ENCODE measurements at regions of chr19 and their contacts with region 1.

Region 1: DNA sequence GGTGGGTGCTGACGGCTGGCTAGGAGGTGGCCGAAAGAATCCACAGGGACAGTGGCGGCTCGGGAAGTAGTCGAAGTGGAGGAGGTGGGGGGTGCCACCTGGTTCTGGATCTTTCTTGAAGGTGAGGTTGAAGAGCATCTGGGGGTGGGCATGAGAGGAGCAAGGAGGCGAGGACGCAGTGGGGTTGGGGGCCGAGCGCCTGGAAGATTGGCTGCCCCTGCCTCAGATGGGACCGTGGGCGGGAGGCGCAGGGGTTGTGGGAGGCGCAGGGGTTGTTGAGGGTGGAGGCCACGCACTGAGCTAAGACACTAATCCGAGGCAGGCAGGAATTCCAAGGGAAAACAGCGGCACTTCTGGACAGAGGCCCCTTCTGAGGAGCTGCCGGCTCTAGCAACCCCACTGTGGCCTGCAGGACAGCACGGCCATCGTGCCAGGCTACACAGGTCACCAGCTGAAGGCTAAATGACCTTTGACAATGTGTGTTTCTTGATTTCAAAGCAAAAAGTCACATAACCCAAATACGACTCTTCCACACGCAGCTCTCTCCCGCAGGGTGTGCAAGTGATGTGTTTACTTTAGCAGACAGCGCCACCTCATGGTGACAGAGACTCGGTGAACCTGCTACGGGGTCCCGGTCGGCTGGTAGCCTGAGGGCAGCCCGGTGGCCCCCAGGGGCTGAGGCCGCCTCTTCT is 44.1 kb upstream of the RANBP3 start:
- DNase-seq: peak; percentile 71
- H3K4me3 ChIP-seq: no peak overlapping the region
- H3K27ac ChIP-seq: no peak overlapping the region
- H3K4me1 ChIP-seq: peaks cover 12% of the 10 kb centered on the region
- H3K27me3 ChIP-seq: no peaks in the 10 kb centered on the region
- CTCF ChIP-seq: peak; percentile 80 to 85
- POLR2A ChIP-seq: no peak

Region 2: GRCh38 chr19:5637971-5638370 is 384.1 kb before region 1 on chr19:
- CTCF ChIA-PET with region 1: no interaction called
- POLR2A ChIA-PET with region 1: no interaction called
- dilution Hi-C with region 1: no loop called
- intact Hi-C with region 1: no loop called
- DNase-seq: no peak
- H3K4me3 ChIP-seq: no peak overlapping the region
- H3K27ac ChIP-seq: no peak overlapping the region
- H3K4me1 ChIP-seq: no peaks in the 10 kb centered on the region
- H3K27me3 ChIP-seq: no peaks in the 10 kb centered on the region
- CTCF ChIP-seq: no peak
- POLR2A ChIP-seq: no peak

Region 3: DNA sequence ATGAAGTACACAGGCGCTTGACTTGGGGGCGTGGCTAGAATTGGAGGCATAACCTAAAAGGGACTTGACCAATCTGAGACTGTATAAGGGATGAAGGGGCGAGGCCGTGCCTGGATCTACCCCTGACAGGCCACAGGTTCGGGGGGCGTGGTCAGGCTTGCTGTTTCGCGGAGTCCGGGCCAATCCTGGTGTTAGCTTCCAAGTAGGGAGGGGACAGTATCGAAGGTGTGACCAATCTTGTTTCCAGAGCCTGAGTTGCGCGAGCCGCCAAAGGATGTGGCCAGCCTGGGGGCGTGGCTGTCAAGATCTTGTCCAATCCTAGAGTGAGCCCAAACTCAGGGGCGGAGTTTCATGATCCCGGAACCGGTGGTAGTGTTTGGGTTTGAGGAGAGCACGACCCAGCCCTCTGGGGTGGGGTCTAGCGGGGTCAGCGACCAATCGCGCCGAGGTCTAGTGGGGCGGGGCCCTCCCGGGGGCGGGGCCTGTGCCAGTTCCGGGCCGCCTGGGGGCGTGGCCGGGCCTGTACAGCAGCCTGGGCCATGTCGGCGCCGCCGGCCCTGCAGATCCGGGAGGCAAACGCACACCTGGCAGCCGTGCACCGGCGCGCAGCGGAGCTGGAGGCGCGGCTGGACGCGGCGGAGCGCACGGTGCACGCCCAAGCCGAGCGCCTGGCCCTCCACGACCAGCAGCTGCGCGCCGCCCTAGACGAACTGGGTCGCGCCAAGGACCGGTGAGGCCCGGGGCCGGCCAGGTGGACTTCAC is 117.5 kb before region 1 on chr19 and contains the start of gene VMAC:
- CTCF ChIA-PET with region 1: interaction called, 7 read pairs
- POLR2A ChIA-PET with region 1: no interaction called
- dilution Hi-C with region 1: no loop called
- intact Hi-C with region 1: loop called (anchors 5 kb)
- DNase-seq: peak; percentile 100
- H3K4me3 ChIP-seq: peak within 1 kb of the TSS; percentile 45 to 89 (median 86)
- H3K27ac ChIP-seq: peak within 1 kb of the TSS; percentile 90
- H3K4me1 ChIP-seq: peaks cover 8% of the 10 kb centered on the region
- H3K27me3 ChIP-seq: no peaks in the 10 kb centered on the region
- CTCF ChIP-seq: no peak
- POLR2A ChIP-seq: peak; percentile 56
- total RNA-seq, gene VMAC: 4.4 and 4.7 TPM in 2 replicates

Region 4: GRCh38 chr19:5961969-5962945 is 59.8 kb before region 1 on chr19:
- CTCF ChIA-PET with region 1: interaction called, 134 read pairs
- POLR2A ChIA-PET with region 1: no interaction called
- dilution Hi-C with region 1: no loop called
- intact Hi-C with region 1: no loop called
- DNase-seq: peak; percentile 93
- H3K4me3 ChIP-seq: no peak overlapping the region
- H3K27ac ChIP-seq: peak overlapping the region; percentile 42
- H3K4me1 ChIP-seq: peaks cover 15% of the 10 kb centered on the region
- H3K27me3 ChIP-seq: no peaks in the 10 kb centered on the region
- CTCF ChIP-seq: no peak
- POLR2A ChIP-seq: no peak

Region 5: DNA sequence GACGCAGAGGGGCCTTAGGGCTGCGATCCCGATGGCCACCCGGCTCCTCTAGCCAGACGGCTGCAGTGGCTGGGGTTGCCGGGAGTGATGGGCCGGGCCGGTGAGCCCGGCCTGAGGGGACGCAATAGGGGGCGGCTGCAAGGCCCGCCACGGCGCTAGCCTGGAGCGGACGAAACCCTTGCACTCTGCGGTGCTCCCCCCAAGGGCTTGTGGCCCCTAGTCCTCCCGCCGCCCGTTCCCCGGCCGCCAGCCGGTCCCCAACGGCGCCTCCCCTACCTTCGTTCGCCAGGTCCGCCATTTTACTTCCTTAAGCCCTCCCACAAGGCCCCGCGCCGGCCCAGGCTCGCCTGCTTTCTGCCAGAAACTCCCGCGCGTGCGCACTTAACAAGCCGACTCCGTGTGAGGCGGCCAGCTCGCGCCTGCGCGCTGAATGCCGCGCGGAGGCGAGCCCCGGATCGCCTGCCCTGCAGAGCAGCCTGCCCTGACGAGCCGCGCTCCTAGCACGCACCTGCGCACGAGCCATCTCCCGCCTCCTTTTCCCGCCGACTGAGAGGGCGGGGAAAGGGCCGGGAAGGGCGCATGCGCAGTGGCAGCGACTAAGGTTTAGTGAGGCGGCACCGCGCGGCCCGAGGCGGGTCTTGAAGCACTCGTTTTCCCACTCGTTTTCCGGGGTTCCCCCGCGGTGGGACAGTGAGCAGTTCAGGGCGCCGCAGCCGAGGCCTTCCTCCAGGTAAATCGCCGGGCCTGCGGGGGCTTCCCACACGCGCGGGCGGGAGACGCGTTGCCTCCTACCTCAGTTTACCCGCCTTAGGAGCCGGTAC is 44.0 kb before region 1 on chr19 and contains the start of gene RANBP3:
- CTCF ChIA-PET with region 1: interaction called, 304 read pairs
- POLR2A ChIA-PET with region 1: no interaction called
- dilution Hi-C with region 1: no loop called
- intact Hi-C with region 1: no loop called
- DNase-seq: peak; percentile 99
- H3K4me3 ChIP-seq: peak within 1 kb of the TSS; percentile 47 to 93 (median 91)
- H3K27ac ChIP-seq: peak within 1 kb of the TSS; percentile 71
- H3K4me1 ChIP-seq: peaks cover 17% of the 10 kb centered on the region
- H3K27me3 ChIP-seq: no peaks in the 10 kb centered on the region
- CTCF ChIP-seq: no peak
- POLR2A ChIP-seq: peak; percentile 66
- total RNA-seq, gene RANBP3: 72.3 and 87.8 TPM in 2 replicates

Region 6: GRCh38 chr19:5993648-5994358 is 28.2 kb before region 1 on chr19:
- CTCF ChIA-PET with region 1: interaction called, 304 read pairs
- POLR2A ChIA-PET with region 1: no interaction called
- dilution Hi-C with region 1: no loop called
- intact Hi-C with region 1: no loop called
- DNase-seq: peak; percentile 54
- H3K4me3 ChIP-seq: no peak overlapping the region
- H3K27ac ChIP-seq: no peak overlapping the region
- H3K4me1 ChIP-seq: peaks cover 15% of the 10 kb centered on the region
- H3K27me3 ChIP-seq: no peaks in the 10 kb centered on the region
- CTCF ChIP-seq: no peak
- POLR2A ChIP-seq: no peak

Region 7: GRCh38 chr19:6048808-6049405 is 26.9 kb after region 1 on chr19:
- CTCF ChIA-PET with region 1: interaction called, 17 read pairs
- POLR2A ChIA-PET with region 1: no interaction called
- dilution Hi-C with region 1: no loop called
- intact Hi-C with region 1: no loop called
- DNase-seq: peak; percentile 77
- H3K4me3 ChIP-seq: no peak overlapping the region
- H3K27ac ChIP-seq: peak overlapping the region; percentile 20
- H3K4me1 ChIP-seq: peaks cover 4% of the 10 kb centered on the region
- H3K27me3 ChIP-seq: no peaks in the 10 kb centered on the region
- CTCF ChIP-seq: peak; percentile 61 to 83
- POLR2A ChIP-seq: no peak